Esophagus squamous epithelium (tissue), 5 donors: ENCODE measurements at regions of chr14 and their contacts with region 1.

Region 1: DNA sequence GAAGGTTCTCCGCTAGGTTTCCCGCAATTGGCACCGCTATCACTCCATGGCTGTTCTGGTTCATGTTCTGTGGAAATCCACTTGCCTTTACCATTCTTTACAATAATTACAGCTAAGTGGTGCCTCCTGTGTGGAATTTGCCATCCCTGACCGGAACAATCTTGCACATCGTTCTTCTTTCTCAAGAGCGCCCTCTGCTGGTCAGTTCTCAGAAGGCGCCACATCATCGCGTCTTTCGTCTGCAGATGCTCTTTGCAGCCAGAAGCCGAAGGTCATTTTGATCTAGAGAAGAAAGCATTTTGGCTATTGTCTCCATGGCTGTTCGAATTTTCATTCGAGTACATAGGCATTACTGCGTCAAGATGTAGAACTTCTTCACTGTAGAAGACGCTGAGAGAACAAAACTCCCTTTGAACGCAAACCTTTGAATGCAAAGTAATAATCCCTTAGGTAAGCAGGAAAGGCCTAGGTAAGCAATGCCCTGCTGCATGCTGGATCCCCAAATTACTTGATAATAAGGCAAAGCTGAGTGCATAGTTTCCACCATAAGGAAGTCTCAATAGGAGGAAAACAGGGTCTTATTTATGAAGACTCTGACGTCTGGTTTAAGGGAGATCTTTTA is 10.1 kb upstream of the RTRAF start:
- DNase-seq: no peak
- H3K4me3 ChIP-seq: no peak overlapping the region
- H3K27ac ChIP-seq: no peak overlapping the region
- H3K4me1 ChIP-seq: peaks cover 0 to 7% (median 4%) of the 10 kb centered on the region in 3 donors
- H3K27me3 ChIP-seq: no peaks in the 10 kb centered on the region
- CTCF ChIP-seq: peak; percentile 78 to 95 (median 88)
- POLR2A ChIP-seq: no peak

Region 2: GRCh38 chr14:51277753-51278415 is 701.3 kb before region 1 on chr14:
- intact Hi-C with region 1: loop called (anchors 10 kb)
- DNase-seq: no peak
- H3K4me3 ChIP-seq: no peak overlapping the region
- H3K27ac ChIP-seq: no peak overlapping the region
- H3K4me1 ChIP-seq: no peaks in the 10 kb centered on the region
- H3K27me3 ChIP-seq: no peaks in the 10 kb centered on the region
- CTCF ChIP-seq: no peak
- POLR2A ChIP-seq: no peak

Region 3: GRCh38 chr14:51807356-51807755 is 171.8 kb before region 1 on chr14:
- intact Hi-C with region 1: loop called (anchors 10 kb)
- DNase-seq: no peak
- H3K4me3 ChIP-seq: no peak overlapping the region
- H3K27ac ChIP-seq: no peak overlapping the region
- H3K4me1 ChIP-seq: no peaks in the 10 kb centered on the region
- H3K27me3 ChIP-seq: no peaks in the 10 kb centered on the region
- CTCF ChIP-seq: no peak
- POLR2A ChIP-seq: no peak

Region 4: GRCh38 chr14:51901475-51902024 is 77.6 kb before region 1 on chr14:
- intact Hi-C with region 1: no loop called
- DNase-seq: no peak
- H3K4me3 ChIP-seq: no peak overlapping the region
- H3K27ac ChIP-seq: no peak overlapping the region
- H3K4me1 ChIP-seq: peaks cover 0 to 7% (median 0%) of the 10 kb centered on the region in 3 donors
- H3K27me3 ChIP-seq: no peaks in the 10 kb centered on the region
- CTCF ChIP-seq: no peak
- POLR2A ChIP-seq: no peak